Body of pancreas (tissue), 4 donors: ENCODE measurements at regions of chr10 and their contacts with region 1.

Region 1: GRCh38 chr10:62732841-62733653 is 71.5 kb upstream of the ADO start:
- DNase-seq: no peak
- ATAC-seq: no peak
- H3K4me3 ChIP-seq: no peak overlapping the region
- H3K27ac ChIP-seq: no peak overlapping the region
- H3K4me1 ChIP-seq: no peaks in the 10 kb centered on the region
- H3K27me3 ChIP-seq: no peaks in the 10 kb centered on the region
- CTCF ChIP-seq: no peak
- POLR2A ChIP-seq: no peak

Region 2: GRCh38 chr10:62545160-62546066 is 187.6 kb before region 1 on chr10:
- intact Hi-C with region 1: no loop called
- DNase-seq: peak in 2 of 4 donors; percentile 7 to 41
- ATAC-seq: peak; percentile 42
- H3K4me3 ChIP-seq: no peak overlapping the region
- H3K27ac ChIP-seq: peak overlapping the region in 1 of 4 donors; percentile 56
- H3K4me1 ChIP-seq: no peaks in the 10 kb centered on the region
- H3K27me3 ChIP-seq: no peaks in the 10 kb centered on the region
- CTCF ChIP-seq: no peak
- POLR2A ChIP-seq: no peak

Region 3: DNA sequence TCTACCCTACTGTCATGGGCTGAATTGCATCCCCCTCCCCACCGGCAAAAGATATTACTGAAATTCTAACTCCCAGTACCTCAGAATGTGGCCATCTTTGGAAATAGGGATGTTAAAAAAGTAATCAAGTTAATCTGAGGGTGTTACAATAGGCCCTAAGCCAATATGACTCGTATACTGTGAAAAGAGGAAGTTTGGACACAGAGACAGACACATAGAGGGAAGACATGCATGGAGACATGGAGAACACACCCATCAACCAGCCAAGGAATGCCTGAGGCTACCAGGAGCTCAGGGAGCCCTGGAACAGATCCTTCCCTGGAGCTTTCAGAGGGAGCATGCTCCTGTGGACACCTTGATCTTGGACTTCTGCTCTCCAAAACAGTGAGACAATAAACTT is 66.8 kb before region 1 on chr10:
- intact Hi-C with region 1: loop called (anchors 10 kb)
- DNase-seq: no peak
- ATAC-seq: no peak
- H3K4me3 ChIP-seq: no peak overlapping the region
- H3K27ac ChIP-seq: no peak overlapping the region
- H3K4me1 ChIP-seq: no peaks in the 10 kb centered on the region
- H3K27me3 ChIP-seq: no peaks in the 10 kb centered on the region
- CTCF ChIP-seq: no peak
- POLR2A ChIP-seq: no peak

Region 4: GRCh38 chr10:62681211-62681940 is 51.7 kb before region 1 on chr10:
- intact Hi-C with region 1: no loop called
- DNase-seq: no peak
- ATAC-seq: no peak
- H3K4me3 ChIP-seq: no peak overlapping the region
- H3K27ac ChIP-seq: no peak overlapping the region
- H3K4me1 ChIP-seq: no peaks in the 10 kb centered on the region
- H3K27me3 ChIP-seq: no peaks in the 10 kb centered on the region
- CTCF ChIP-seq: no peak
- POLR2A ChIP-seq: no peak